ENCODE measurements at regions of chr19 and their contacts with region 1.

Region 1: GRCh38 chr19:11380653-11381534 is 3.2 kb downstream of the EPOR start:
- DNase-seq: peak; percentile 99
- H3K4me3 ChIP-seq: peak overlapping the region; percentile 58
- H3K4me3 Mint-ChIP-seq: peak overlapping the region; percentile 95
- H3K27ac Mint-ChIP-seq: peak overlapping the region; percentile 98
- H3K4me1 ChIP-seq: 0 out of 2 replicates have a peak, but pooled peaks cover 4% of the 10 kb centered on the region
- H3K4me1 Mint-ChIP-seq: no peaks in the 10 kb centered on the region
- H3K27me3 ChIP-seq: no peaks in the 10 kb centered on the region
- H3K27me3 Mint-ChIP-seq: no peaks in the 10 kb centered on the region
- CTCF ChIP-seq: peak; percentile 68 to 70

Region 2: DNA sequence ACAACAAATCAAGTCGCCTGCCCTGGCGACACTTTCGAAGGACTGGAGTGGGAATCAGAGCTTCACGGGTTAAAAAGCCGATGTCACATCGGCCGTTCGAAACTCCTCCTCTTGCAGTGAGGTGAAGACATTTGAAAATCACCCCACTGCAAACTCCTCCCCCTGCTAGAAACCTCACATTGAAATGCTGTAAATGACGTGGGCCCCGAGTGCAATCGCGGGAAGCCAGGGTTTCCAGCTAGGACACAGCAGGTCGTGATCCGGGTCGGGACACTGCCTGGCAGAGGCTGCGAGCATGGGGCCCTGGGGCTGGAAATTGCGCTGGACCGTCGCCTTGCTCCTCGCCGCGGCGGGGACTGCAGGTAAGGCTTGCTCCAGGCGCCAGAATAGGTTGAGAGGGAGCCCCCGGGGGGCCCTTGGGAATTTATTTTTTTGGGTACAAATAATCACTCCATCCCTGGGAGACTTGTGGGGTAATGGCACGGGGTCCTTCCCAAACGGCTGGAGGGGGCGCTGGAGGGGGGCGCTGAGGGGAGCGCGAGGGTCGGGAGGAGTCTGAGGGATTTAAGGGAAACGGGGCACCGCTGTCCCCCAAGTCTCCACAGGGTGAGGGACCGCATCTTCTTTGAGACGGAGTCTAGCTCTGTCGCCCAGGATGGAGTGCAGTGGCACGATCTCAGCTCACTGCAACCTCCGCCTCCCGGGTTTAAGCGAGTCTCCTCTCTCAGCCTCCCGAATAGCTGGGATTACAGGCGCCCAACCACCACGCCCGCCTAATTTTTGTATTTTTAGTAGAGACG is 291.4 kb before region 1 on chr19 and contains the start of gene LDLR:
- CTCF ChIA-PET with region 1: no interaction called
- POLR2A ChIA-PET with region 1: no interaction called
- intact Hi-C with region 1: no loop called
- DNase-seq: peak; percentile 92 to 95
- H3K4me3 ChIP-seq: peak within 1 kb of the TSS; percentile 87
- H3K4me3 Mint-ChIP-seq: peak within 1 kb of the TSS; percentile 90
- H3K27ac Mint-ChIP-seq: peak within 1 kb of the TSS; percentile 99
- H3K4me1 ChIP-seq: peaks cover 35% of the 10 kb centered on the region
- H3K4me1 Mint-ChIP-seq: peaks cover 1% of the 10 kb centered on the region
- H3K27me3 ChIP-seq: no peaks in the 10 kb centered on the region
- H3K27me3 Mint-ChIP-seq: no peaks in the 10 kb centered on the region
- CTCF ChIP-seq: no peak
- total RNA-seq, gene LDLR: 68.9 and 83.4 TPM in 2 replicates

Region 3: GRCh38 chr19:11346092-11346940 is 34.6 kb before region 1 on chr19 and contains the starts of genes CCDC159 and TMEM205:
- CTCF ChIA-PET with region 1: interaction called, 22 read pairs
- POLR2A ChIA-PET with region 1: interaction called, 7 read pairs
- intact Hi-C with region 1: no loop called
- DNase-seq: peak; percentile 97 to 98
- H3K4me3 ChIP-seq: peak within 1 kb of the TSS; percentile 47
- H3K4me3 Mint-ChIP-seq: peak within 1 kb of the TSS; percentile 94
- H3K27ac Mint-ChIP-seq: peak within 1 kb of the TSS; percentile 92
- H3K4me1 ChIP-seq: peaks cover 17% of the 10 kb centered on the region
- H3K4me1 Mint-ChIP-seq: peaks cover 29% of the 10 kb centered on the region
- H3K27me3 ChIP-seq: no peaks in the 10 kb centered on the region
- H3K27me3 Mint-ChIP-seq: no peaks in the 10 kb centered on the region
- CTCF ChIP-seq: peak in 1 of 2 experiments; percentile 1
- total RNA-seq, gene CCDC159: 11.7 and 13.9 TPM in 2 replicates
- total RNA-seq, gene TMEM205: 68.3 and 76.1 TPM in 2 replicates

Region 4: DNA sequence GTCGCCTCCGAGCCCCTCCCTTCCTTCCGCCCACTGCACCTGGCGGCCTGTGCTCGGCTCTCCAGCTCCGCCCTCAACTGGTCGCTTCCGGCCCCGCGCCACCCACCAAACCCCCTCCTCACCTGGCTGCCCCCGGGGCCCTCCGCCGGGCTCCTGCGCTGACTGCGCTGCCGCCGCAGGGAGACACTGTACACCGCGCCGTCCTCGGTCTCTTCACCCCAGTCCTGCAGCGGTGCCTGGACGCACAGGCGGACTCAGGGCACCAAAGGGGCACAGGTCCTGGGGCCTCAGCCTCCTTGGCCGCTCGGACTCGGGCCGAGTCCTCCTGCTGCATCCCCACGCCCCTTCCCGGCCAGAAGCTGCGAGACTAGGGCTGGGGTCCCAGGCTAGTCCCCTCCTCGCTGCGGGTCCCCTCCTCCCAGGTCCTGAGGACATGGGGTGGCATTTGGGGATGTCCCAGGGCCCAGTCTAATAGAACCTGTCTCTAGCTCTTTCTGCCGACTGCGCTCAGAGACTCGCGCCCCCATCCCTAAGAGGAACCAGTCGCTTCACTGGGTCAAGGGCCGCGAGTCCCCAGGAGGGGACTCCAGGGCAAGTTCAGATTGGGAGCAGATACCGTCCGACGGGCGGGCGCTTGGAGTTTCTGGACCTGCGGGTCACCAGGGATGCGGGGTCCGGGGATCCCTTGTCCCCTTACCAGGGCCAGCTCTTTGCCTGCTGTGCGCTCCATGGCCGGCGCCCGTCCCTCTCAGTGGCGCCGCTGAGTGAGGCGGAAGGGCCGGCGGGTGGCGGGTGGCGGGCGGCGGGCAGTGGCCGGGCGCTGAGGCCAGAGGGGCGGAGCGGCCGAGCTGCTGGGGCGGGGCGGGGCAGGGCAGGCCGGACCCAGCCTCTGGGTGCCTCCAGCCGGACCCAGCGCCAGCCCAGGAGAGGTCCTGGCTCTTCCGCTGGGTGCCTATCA is 37.9 kb after region 1 on chr19 and contains the start of gene RGL3:
- CTCF ChIA-PET with region 1: interaction called, 28 read pairs
- POLR2A ChIA-PET with region 1: interaction called, 5 read pairs
- intact Hi-C with region 1: loop called (anchors 5 kb)
- DNase-seq: peak; percentile 81 to 84
- H3K4me3 ChIP-seq: peak within 1 kb of the TSS; percentile 58
- H3K4me3 Mint-ChIP-seq: peak within 1 kb of the TSS; percentile 92
- H3K27ac Mint-ChIP-seq: peak within 1 kb of the TSS; percentile 89
- H3K4me1 ChIP-seq: no peaks in the 10 kb centered on the region
- H3K4me1 Mint-ChIP-seq: peaks cover 6% of the 10 kb centered on the region
- H3K27me3 ChIP-seq: no peaks in the 10 kb centered on the region
- H3K27me3 Mint-ChIP-seq: no peaks in the 10 kb centered on the region
- CTCF ChIP-seq: no peak
- total RNA-seq, gene RGL3: 53.1 and 58.8 TPM in 2 replicates

Region 5: GRCh38 chr19:11446652-11447301 is 65.9 kb after region 1 on chr19:
- CTCF ChIA-PET with region 1: interaction called, 21 read pairs
- POLR2A ChIA-PET with region 1: interaction called, 7 read pairs
- intact Hi-C with region 1: no loop called
- DNase-seq: peak in 1 of 2 experiments; percentile 72
- H3K4me3 ChIP-seq: no peak overlapping the region
- H3K4me3 Mint-ChIP-seq: no peak overlapping the region
- H3K27ac Mint-ChIP-seq: no peak overlapping the region
- H3K4me1 ChIP-seq: no peaks in the 10 kb centered on the region
- H3K4me1 Mint-ChIP-seq: no peaks in the 10 kb centered on the region
- H3K27me3 ChIP-seq: no peaks in the 10 kb centered on the region
- H3K27me3 Mint-ChIP-seq: no peaks in the 10 kb centered on the region
- CTCF ChIP-seq: peak; percentile 52 to 68

Measured in Caco-2 (cell line).